ENCODE measurements at regions of chr7 and their contacts with region 1.

Region 1: GRCh38 chr7:1086588-1087464 is 1.1 kb upstream of the GPER1 start:
- DNase-seq: peak; percentile 67 to 87 (median 76)
- ATAC-seq: peak; percentile 28 to 80 (median 66)
- H3K4me3 ChIP-seq: peak overlapping the region; percentile 0 to 64 (median 52)
- H3K27ac ChIP-seq: peak overlapping the region in 6 of 12 donors; percentile 1 to 69 (median 46)
- H3K4me1 ChIP-seq: peaks cover 0 to 35% (median 25%) of the 10 kb centered on the region in 12 donors
- H3K27me3 ChIP-seq: no peaks in the 10 kb centered on the region
- CTCF ChIP-seq: peak; percentile 87 to 99 (median 94)
- POLR2A ChIP-seq: no peak

Region 2: GRCh38 chr7:909358-910329 is 177.2 kb before region 1 on chr7:
- intact Hi-C with region 1: no loop called
- DNase-seq: peak; percentile 72 to 88 (median 78)
- ATAC-seq: peak; percentile 40 to 81 (median 70)
- H3K4me3 ChIP-seq: peak overlapping the region in 10 of 12 donors; percentile 8 to 54 (median 36)
- H3K27ac ChIP-seq: peak overlapping the region in 5 of 12 donors; percentile 32 to 81 (median 34)
- H3K4me1 ChIP-seq: peaks cover 0 to 29% (median 3%) of the 10 kb centered on the region in 12 donors
- H3K27me3 ChIP-seq: peaks cover 0 to 5% (median 0%) of the 10 kb centered on the region in 9 donors
- CTCF ChIP-seq: no peak
- POLR2A ChIP-seq: no peak

Region 3: GRCh38 chr7:1123715-1124114 is 36.9 kb after region 1 on chr7:
- intact Hi-C with region 1: loop called in 7 of 10 experiments (anchors 2 to 5 kb)
- DNase-seq: peak; percentile 82 to 91 (median 89)
- ATAC-seq: peak; percentile 81 to 94 (median 91)
- H3K4me3 ChIP-seq: peak overlapping the region in 9 of 12 donors; percentile 15 to 52 (median 39)
- H3K27ac ChIP-seq: peak overlapping the region; percentile 55 to 89 (median 75)
- H3K4me1 ChIP-seq: peaks cover 0 to 33% (median 12%) of the 10 kb centered on the region in 12 donors
- H3K27me3 ChIP-seq: no peaks in the 10 kb centered on the region
- CTCF ChIP-seq: peak; percentile 31 to 77 (median 61)
- POLR2A ChIP-seq: no peak

Region 4: GRCh38 chr7:1137510-1138167 is 50.8 kb after region 1 on chr7:
- intact Hi-C with region 1: loop called in 3 of 10 experiments (anchors 5 kb)
- DNase-seq: no peak
- ATAC-seq: peak; percentile 24 to 90 (median 66)
- H3K4me3 ChIP-seq: peak overlapping the region; percentile 60 to 93 (median 82)
- H3K27ac ChIP-seq: peak overlapping the region in 11 of 12 donors; percentile 52 to 87 (median 69)
- H3K4me1 ChIP-seq: peaks cover 0 to 19% (median 13%) of the 10 kb centered on the region in 12 donors
- H3K27me3 ChIP-seq: no peaks in the 10 kb centered on the region
- CTCF ChIP-seq: no peak
- POLR2A ChIP-seq: no peak

Region 5: DNA sequence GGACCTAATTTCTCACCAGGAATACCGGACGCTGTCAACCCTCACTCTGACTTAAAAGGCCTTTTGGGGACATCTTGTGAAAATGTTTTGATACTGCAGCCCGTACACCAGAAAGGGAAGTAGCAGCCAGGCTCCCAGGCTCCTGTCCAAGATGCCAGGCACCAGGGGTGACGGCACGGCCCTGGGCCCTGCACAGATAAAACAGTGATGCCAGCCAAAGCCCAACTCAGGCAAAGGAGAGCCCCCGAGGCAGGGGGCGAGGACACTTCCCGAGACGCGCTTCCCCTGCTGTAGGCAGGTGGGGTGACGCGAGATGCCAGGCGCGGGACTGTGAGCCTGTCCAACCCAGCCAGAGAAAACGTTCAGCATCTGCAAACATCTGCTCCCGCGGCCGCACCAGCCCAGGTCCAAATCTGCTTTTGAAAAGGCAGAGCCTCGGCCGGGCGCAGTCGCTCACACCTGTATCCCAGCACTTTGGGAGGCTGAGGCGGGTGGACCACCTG is 57.5 kb after region 1 on chr7:
- intact Hi-C with region 1: loop called in 4 of 10 experiments (anchors 2 to 5 kb)
- DNase-seq: peak in 4 of 5 donors; percentile 56 to 80 (median 68)
- ATAC-seq: peak; percentile 71 to 96 (median 94)
- H3K4me3 ChIP-seq: no peak overlapping the region
- H3K27ac ChIP-seq: peak overlapping the region in 3 of 12 donors; percentile 7 to 49 (median 18)
- H3K4me1 ChIP-seq: peaks cover 0 to 9% (median 2%) of the 10 kb centered on the region in 12 donors
- H3K27me3 ChIP-seq: no peaks in the 10 kb centered on the region
- CTCF ChIP-seq: peak; percentile 13 to 60 (median 41)
- POLR2A ChIP-seq: no peak

Region 6: GRCh38 chr7:1169409-1170368 is 82.9 kb after region 1 on chr7:
- intact Hi-C with region 1: loop called in 4 of 10 experiments (anchors 5 to 10 kb)
- DNase-seq: peak; percentile 77 to 91 (median 89)
- ATAC-seq: peak; percentile 67 to 96 (median 89)
- H3K4me3 ChIP-seq: peak overlapping the region in 10 of 12 donors; percentile 19 to 64 (median 58)
- H3K27ac ChIP-seq: peak overlapping the region in 10 of 12 donors; percentile 16 to 75 (median 45)
- H3K4me1 ChIP-seq: peaks cover 0 to 14% (median 1%) of the 10 kb centered on the region in 12 donors
- H3K27me3 ChIP-seq: no peaks in the 10 kb centered on the region
- CTCF ChIP-seq: peak; percentile 63 to 90 (median 84)
- POLR2A ChIP-seq: peak in 1 of 2 donors; percentile 44

Region 7: DNA sequence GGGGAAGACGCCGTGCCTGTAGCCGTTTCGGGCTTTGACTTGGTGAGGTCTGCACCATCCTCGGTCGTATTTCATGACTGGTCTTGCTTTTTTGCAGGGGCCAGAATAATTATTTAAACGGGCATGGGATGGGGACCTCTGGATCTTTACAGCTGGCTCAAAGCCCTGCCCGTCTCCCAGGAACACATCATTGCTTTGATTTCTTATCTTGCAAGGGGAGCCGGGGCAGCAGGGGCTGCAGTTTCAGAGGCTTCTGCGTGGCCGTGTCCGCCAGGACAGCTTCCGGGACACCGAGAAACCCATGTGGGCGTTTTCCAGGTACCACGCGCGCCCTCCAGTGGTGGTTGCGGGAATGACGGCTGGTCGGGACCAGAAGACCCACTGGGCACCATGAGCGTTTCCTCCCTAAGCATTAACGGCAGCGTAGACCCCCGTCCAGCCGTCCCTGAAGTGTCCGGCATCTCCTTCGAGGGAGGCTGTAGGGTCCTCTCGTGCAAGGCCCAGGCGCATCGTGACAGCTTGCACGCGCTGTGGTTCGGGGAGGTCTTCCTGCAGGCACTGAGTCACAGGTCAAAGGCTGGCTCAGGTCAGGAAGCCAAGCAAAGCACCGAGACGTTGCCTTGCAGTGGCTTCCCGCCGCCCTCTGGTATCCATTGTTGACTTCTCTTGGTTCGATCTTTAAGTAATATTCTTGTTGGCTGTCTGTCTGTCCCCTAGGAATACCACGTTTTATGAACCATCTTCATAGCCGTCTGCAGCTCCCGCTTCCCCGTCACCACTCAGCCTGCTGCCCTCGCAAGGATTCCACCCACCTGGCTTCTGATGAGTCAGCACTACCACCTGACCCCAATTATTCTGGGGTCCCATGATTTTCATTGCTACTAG is 89.4 kb after region 1 on chr7:
- intact Hi-C with region 1: loop called in 8 of 10 experiments (anchors 2 to 10 kb)
- DNase-seq: peak; percentile 71 to 92 (median 81)
- ATAC-seq: peak in 3 of 4 donors; percentile 66 to 85 (median 85)
- H3K4me3 ChIP-seq: peak overlapping the region in 9 of 12 donors; percentile 7 to 39 (median 28)
- H3K27ac ChIP-seq: peak overlapping the region in 2 of 12 donors; percentile 33 to 47
- H3K4me1 ChIP-seq: peaks cover 0 to 13% (median 5%) of the 10 kb centered on the region in 12 donors
- H3K27me3 ChIP-seq: no peaks in the 10 kb centered on the region
- CTCF ChIP-seq: peak; percentile 82 to 95 (median 89)
- POLR2A ChIP-seq: no peak

Measured in heart left ventricle (tissue), 16 donors.